ENCODE measurements at regions of chr11 and their contacts with region 1.

Region 1: GRCh38 chr11:34357701-34358257 is at the start of gene ABTB2:
- DNase-seq: peak; percentile 99
- H3K4me3 ChIP-seq: peak within 1 kb of the TSS; percentile 68 to 85
- H3K27ac ChIP-seq: peak within 1 kb of the TSS; percentile 84 to 89
- H3K4me1 ChIP-seq: peaks cover 0 to 37% (median 25%) of the 10 kb centered on the region in 4 donors
- H3K27me3 ChIP-seq: no peaks in the 10 kb centered on the region
- CTCF ChIP-seq: no peak

Region 2: DNA sequence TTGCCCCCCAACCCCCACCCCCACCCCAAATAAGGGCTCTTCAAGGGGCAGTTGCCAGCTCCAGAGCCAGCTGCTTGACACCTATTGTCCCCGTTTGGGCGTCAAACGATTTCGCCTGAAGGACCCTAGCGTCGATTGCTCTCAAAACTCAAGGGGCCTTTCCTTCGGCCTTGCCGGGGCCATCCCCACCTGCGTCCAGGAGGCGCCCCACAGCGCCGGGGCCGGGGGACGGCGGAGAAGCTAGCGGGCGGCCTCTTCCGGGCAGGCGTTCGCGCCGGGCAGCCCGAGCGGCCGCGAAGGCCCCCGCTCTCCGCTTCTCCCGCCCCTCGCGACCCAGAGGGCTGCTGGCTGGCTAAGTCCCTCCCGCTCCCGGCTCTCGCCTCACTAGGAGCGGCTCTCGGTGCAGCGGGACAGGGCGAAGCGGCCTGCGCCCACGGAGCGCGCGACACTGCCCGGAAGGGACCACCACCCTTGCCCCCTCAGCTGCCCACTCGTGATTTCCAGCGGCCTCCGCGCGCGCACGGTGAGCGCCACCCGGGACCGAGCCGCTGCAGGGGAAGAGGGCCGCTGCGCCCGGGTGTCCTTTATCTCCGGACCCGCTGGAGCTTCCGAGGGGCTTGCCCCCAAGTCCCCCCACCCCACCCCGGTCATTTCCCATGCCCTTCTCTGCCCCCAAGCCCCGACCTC is 306.3 kb before region 1 on chr11 and contains the start of gene CAPRIN1:
- intact Hi-C with region 1: loop called (anchors 10 kb)
- DNase-seq: peak; percentile 82 to 91
- H3K4me3 ChIP-seq: peak within 1 kb of the TSS; percentile 94 to 98
- H3K27ac ChIP-seq: peak within 1 kb of the TSS; percentile 97 to 98
- H3K4me1 ChIP-seq: peaks cover 4 to 42% (median 29%) of the 10 kb centered on the region in 4 donors
- H3K27me3 ChIP-seq: no peaks in the 10 kb centered on the region
- CTCF ChIP-seq: no peak

Region 3: GRCh38 chr11:34174412-34175041 is 183.3 kb before region 1 on chr11:
- intact Hi-C with region 1: loop called (anchors 2 kb)
- DNase-seq: peak; percentile 82 to 90
- H3K4me3 ChIP-seq: peak overlapping the region; percentile 26 to 47
- H3K27ac ChIP-seq: peak overlapping the region; percentile 33 to 54
- H3K4me1 ChIP-seq: peaks cover 0 to 13% (median 8%) of the 10 kb centered on the region in 4 donors
- H3K27me3 ChIP-seq: no peaks in the 10 kb centered on the region
- CTCF ChIP-seq: peak; percentile 97 to 98

Region 4: GRCh38 chr11:34266090-34266912 is 91.5 kb before region 1 on chr11:
- intact Hi-C with region 1: loop called (anchors 5 kb)
- DNase-seq: peak; percentile 70 to 80
- H3K4me3 ChIP-seq: no peak overlapping the region
- H3K27ac ChIP-seq: peak overlapping the region; percentile 60 to 69
- H3K4me1 ChIP-seq: peaks cover 0 to 57% (median 33%) of the 10 kb centered on the region in 4 donors
- H3K27me3 ChIP-seq: no peaks in the 10 kb centered on the region
- CTCF ChIP-seq: no peak

Region 5: GRCh38 chr11:34302046-34302921 is 55.5 kb before region 1 on chr11:
- intact Hi-C with region 1: no loop called
- DNase-seq: no peak
- H3K4me3 ChIP-seq: no peak overlapping the region
- H3K27ac ChIP-seq: no peak overlapping the region
- H3K4me1 ChIP-seq: peaks cover 0 to 14% (median 2%) of the 10 kb centered on the region in 4 donors
- H3K27me3 ChIP-seq: no peaks in the 10 kb centered on the region
- CTCF ChIP-seq: no peak

Region 6: DNA sequence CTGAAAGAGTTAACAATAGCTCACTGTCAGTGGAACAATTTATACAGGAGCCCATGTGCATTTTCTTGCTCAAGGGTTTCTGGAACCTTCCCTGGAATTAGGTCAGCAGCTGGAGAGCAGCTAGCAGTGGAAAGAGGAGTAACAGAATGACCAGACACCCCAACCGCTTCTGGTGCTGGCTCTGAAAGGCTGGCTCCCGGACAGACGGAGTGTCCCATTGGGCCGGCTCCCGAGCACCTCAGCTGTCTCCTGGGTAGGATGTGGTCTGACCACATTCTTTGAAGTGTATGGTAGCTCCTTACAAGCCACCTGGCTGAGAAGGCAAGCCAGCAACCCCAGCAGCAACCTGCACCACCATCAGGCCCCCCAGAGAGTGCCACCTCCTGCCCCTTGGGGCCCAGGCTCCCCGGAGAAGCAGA is 44.7 kb before region 1 on chr11:
- intact Hi-C with region 1: no loop called
- DNase-seq: no peak
- H3K4me3 ChIP-seq: no peak overlapping the region
- H3K27ac ChIP-seq: no peak overlapping the region
- H3K4me1 ChIP-seq: peaks cover 0 to 21% (median 4%) of the 10 kb centered on the region in 4 donors
- H3K27me3 ChIP-seq: no peaks in the 10 kb centered on the region
- CTCF ChIP-seq: no peak